GM18951 (cell line): ENCODE measurements at regions of chr2 and their contacts with region 1.

Region 1: GRCh38 chr2:131673392-131674173 is 145.9 kb downstream of the CCDC74A start:
- POLR2A ChIP-seq: no peak

Region 2: DNA sequence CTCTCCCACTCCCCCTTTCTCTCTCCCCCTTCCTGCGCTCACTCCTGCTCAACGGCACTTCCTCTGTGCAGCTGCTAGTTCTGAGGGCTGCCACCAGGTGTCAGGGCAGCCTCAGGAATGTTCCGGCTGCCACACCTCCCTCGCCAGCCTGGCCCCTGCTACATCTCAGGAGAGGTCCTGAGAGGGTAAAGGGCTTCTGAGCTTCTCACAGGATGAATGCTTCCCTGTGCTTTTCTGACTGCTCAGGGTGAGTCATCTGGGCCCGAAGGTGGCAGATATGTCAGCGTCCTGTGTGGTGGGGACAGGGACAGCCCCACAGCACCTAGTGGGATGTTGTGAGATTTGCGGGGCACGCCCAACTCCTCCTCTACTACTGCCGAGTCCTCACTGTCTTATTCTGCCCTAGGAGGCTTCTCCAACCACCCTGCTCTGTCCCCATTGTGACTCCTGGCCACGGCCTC is 519.5 kb before region 1 on chr2:
- in situ Hi-C with region 1: loop called (anchors 25 kb)
- POLR2A ChIP-seq: no peak

Region 3: GRCh38 chr2:131413148-131413747 is 260.3 kb before region 1 on chr2:
- in situ Hi-C with region 1: loop called (anchors 10 kb)
- POLR2A ChIP-seq: no peak

Region 4: GRCh38 chr2:131754929-131755720 is 81.5 kb after region 1 on chr2:
- in situ Hi-C with region 1: no loop called
- POLR2A ChIP-seq: no peak

Region 5: DNA sequence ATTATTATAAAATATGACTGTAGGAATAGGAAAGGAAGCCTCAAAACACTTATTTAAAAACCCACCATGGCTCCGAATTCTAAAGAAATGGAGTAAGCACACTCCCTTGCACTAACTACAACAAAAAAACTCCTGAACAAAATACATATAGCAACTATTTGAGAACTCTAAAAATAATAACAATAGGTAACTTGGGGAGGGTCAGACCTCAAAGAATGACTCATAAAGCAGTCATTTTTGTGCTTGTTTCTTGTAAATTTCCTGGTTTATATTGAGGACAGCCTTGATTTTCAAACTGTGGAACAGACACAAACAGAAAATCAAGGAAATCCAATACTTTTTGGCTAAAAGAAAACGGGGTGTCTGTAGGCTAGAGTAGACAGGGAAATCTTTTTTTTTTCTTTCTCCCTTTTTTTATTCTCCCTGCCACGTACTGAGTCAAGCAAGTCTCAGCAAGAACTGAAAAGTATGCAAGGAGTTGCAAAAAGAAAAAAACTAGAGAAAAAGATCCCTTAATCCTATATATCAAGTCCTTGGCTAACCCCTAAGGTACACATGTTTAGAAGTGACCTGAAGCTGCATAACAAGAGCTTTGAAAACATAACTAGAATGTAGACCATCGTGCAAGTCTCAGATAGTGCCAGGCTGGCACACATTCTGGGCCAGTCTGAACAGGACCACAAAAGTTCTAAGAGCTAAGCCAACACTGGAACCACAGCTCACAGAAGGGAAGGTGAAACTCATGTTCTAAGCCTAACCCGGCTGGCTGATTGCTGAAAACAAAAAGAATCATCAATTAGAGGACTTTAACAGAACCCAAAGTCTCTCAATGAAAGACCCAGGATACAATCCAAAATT is 1399.5 kb after region 1 on chr2:
- in situ Hi-C with region 1: no loop called
- POLR2A ChIP-seq: no peak